IMR-90 (cell line): ENCODE measurements at regions of chr12 and their contacts with region 1.

Region 1: GRCh38 chr12:108618079-108618952 is 15.4 kb downstream of the SELPLG start:
- DNase-seq: peak; percentile 83
- ATAC-seq: peak; percentile 95
- H3K4me3 ChIP-seq: no peak overlapping the region
- H3K27ac ChIP-seq: no peak overlapping the region
- H3K4me1 ChIP-seq: peaks cover 3% of the 10 kb centered on the region; the same call in 1 of the 2 replicates
- H3K27me3 ChIP-seq: no peaks in the 10 kb centered on the region
- CTCF ChIP-seq: peak; percentile 97
- POLR2A ChIP-seq: peak; percentile 39; the same call in 1 of the 2 replicates
- RAD21 ChIP-seq: peak; percentile 98

Region 2: GRCh38 chr12:108063192-108063591 is 555.1 kb before region 1 on chr12:
- CTCF ChIA-PET with region 1: no interaction called
- POLR2A ChIA-PET with region 1: no interaction called
- dilution Hi-C with region 1: no loop called
- in situ Hi-C with region 1: no loop called
- intact Hi-C with region 1: no loop called
- DNase-seq: no peak
- ATAC-seq: no peak
- H3K4me3 ChIP-seq: no peak overlapping the region
- H3K27ac ChIP-seq: no peak overlapping the region
- H3K4me1 ChIP-seq: no peaks in the 10 kb centered on the region
- H3K27me3 ChIP-seq: no peaks in the 10 kb centered on the region
- CTCF ChIP-seq: peak; percentile 20; the same call in 1 of the 2 replicates
- POLR2A ChIP-seq: no peak
- RAD21 ChIP-seq: peak; percentile 21; the same call in 1 of the 2 replicates

Region 3: GRCh38 chr12:108570743-108571608 is 47.3 kb before region 1 on chr12:
- CTCF ChIA-PET with region 1: interaction called, 37 read pairs
- POLR2A ChIA-PET with region 1: no interaction called
- dilution Hi-C with region 1: no loop called
- in situ Hi-C with region 1: loop called (anchors 5 kb)
- intact Hi-C with region 1: loop called (anchors 1 kb)
- DNase-seq: peak; percentile 67
- ATAC-seq: peak; percentile 82
- H3K4me3 ChIP-seq: no peak overlapping the region
- H3K27ac ChIP-seq: no peak overlapping the region
- H3K4me1 ChIP-seq: no peaks in the 10 kb centered on the region
- H3K27me3 ChIP-seq: no peaks in the 10 kb centered on the region
- CTCF ChIP-seq: peak; percentile 66
- POLR2A ChIP-seq: no peak
- RAD21 ChIP-seq: peak; percentile 76

Region 4: DNA sequence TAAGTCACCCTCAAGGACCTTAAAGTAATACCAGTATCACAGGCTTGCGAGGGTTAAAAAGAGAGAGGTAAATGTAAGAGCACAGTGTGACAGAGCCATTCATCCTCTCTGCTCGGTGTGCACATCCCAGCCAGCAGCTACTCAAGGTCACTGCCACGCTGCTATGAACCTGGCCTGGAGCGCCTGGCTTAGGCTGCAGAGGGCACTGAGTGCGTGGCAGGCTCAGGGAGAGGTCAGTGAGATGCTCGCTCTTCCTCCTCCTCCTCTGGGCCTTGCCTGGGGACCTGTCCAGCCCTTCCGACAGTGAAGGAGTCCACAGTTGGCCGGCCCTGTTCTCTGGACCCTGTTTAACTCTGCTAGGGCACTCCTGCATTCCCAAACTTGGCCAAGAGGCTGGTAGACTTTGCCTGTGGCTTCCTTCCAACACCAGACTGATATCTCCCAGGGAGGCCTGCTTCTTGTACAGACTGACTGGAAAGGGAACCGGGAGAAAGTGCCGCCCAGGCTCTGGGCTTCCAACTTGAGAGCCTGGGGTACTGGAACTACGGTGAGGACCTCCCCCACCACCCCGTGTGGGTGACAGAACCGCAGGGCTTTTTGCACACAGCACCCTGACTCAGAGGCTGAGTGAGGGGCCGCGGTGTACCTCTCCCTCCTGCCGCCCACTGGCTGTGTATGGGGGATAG is 175.6 kb after region 1 on chr12:
- CTCF ChIA-PET with region 1: no interaction called
- POLR2A ChIA-PET with region 1: no interaction called
- dilution Hi-C with region 1: no loop called
- in situ Hi-C with region 1: no loop called
- intact Hi-C with region 1: no loop called
- DNase-seq: no peak
- ATAC-seq: peak; percentile 7; the same call in 1 of the 2 replicates
- H3K4me3 ChIP-seq: no peak overlapping the region
- H3K27ac ChIP-seq: peak overlapping the region; percentile 4; the same call in 1 of the 2 replicates
- H3K4me1 ChIP-seq: peaks cover 13% of the 10 kb centered on the region
- H3K27me3 ChIP-seq: no peaks in the 10 kb centered on the region
- CTCF ChIP-seq: no peak
- POLR2A ChIP-seq: no peak
- RAD21 ChIP-seq: no peak